PC-9 (cell line): ENCODE measurements at regions of chr16 and their contacts with region 1.

Region 1: GRCh38 chr16:56608043-56608875 is at the start of gene MT2A:
- DNase-seq: peak; percentile 89 to 91
- H3K4me3 ChIP-seq: peak within 1 kb of the TSS; percentile 90
- H3K27ac ChIP-seq: peak within 1 kb of the TSS; percentile 95
- H3K4me1 ChIP-seq: peaks cover 88% of the 10 kb centered on the region
- H3K27me3 ChIP-seq: no peaks in the 10 kb centered on the region
- CTCF ChIP-seq: no peak
- total RNA-seq, gene MT2A: 203 and 353 TPM in 2 replicates

Region 2: DNA sequence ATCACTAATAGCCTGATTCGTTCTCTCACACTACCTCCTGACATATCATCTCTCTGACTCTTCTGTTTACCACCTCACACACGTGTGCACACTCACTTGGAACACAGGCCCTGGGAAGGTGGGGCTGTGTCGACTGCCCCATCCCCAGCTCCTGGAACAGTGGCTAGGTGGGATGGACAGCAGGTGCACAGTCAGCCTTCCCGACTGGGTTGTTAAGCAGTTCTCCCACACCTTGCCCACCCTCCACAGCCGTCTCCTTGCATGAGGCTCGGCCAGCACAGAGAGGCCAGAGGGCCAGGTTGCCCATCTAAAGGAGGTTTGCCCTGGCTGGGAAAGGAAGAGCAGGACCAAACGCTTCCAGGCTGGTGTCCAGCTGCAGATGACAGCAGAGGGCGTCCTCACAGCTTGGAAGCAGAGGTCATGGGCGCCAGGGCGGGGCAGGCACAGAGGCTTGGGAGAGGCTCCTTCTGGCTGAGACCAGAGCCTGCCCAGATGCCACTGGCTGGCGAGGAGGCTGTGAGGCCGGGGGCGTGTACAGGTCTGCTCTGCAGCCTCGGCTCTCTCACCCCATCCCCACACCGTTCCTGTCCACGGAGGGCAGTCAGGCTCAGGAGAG is 275.7 kb before region 1 on chr16:
- CTCF ChIA-PET with region 1: no interaction called
- POLR2A ChIA-PET with region 1: no interaction called
- intact Hi-C with region 1: loop called (anchors 10 kb)
- DNase-seq: peak; percentile 62 to 83
- H3K4me3 ChIP-seq: no peak overlapping the region
- H3K27ac ChIP-seq: peak overlapping the region; percentile 99
- H3K4me1 ChIP-seq: peaks cover 60% of the 10 kb centered on the region
- H3K27me3 ChIP-seq: no peaks in the 10 kb centered on the region
- CTCF ChIP-seq: no peak

Region 3: GRCh38 chr16:56576585-56577293 is 31.5 kb before region 1 on chr16:
- CTCF ChIA-PET with region 1: interaction called, 4 read pairs
- POLR2A ChIA-PET with region 1: no interaction called
- intact Hi-C with region 1: loop called (anchors 2 kb)
- DNase-seq: peak; percentile 92 to 95
- H3K4me3 ChIP-seq: no peak overlapping the region
- H3K27ac ChIP-seq: peak overlapping the region; percentile 75
- H3K4me1 ChIP-seq: peaks cover 14% of the 10 kb centered on the region
- H3K27me3 ChIP-seq: no peaks in the 10 kb centered on the region
- CTCF ChIP-seq: peak; percentile 91

Region 4: GRCh38 chr16:56625140-56625942 is 17.1 kb after region 1 on chr16 and contains the start of gene MT1E:
- CTCF ChIA-PET with region 1: no interaction called
- POLR2A ChIA-PET with region 1: interaction called, 4 read pairs
- intact Hi-C with region 1: loop called (anchors 2 kb)
- DNase-seq: no peak
- H3K4me3 ChIP-seq: no peak within 1 kb of the TSS
- H3K27ac ChIP-seq: peak within 1 kb of the TSS; percentile 62; the same call in 1 of the 2 replicates
- H3K4me1 ChIP-seq: peaks cover 17% of the 10 kb centered on the region
- H3K27me3 ChIP-seq: no peaks in the 10 kb centered on the region
- CTCF ChIP-seq: no peak
- total RNA-seq, gene MT1E: 22.0 and 22.2 TPM in 2 replicates

Region 5: GRCh38 chr16:56643080-56643778 is 35.0 kb after region 1 on chr16:
- CTCF ChIA-PET with region 1: interaction called, 5 read pairs
- POLR2A ChIA-PET with region 1: interaction called, 3 read pairs
- intact Hi-C with region 1: loop called (anchors 1 kb)
- DNase-seq: peak; percentile 69 to 79
- H3K4me3 ChIP-seq: peak overlapping the region; percentile 32; the same call in 1 of the 2 replicates
- H3K27ac ChIP-seq: no peak overlapping the region
- H3K4me1 ChIP-seq: peaks cover 34% of the 10 kb centered on the region
- H3K27me3 ChIP-seq: no peaks in the 10 kb centered on the region
- CTCF ChIP-seq: peak; percentile 54

Region 6: GRCh38 chr16:56681939-56682702 is 73.9 kb after region 1 on chr16 and contains the start of gene MT1X:
- CTCF ChIA-PET with region 1: no interaction called
- POLR2A ChIA-PET with region 1: no interaction called
- intact Hi-C with region 1: loop called (anchors 2 kb)
- DNase-seq: peak; percentile 73 to 91
- H3K4me3 ChIP-seq: peak within 1 kb of the TSS; percentile 79
- H3K27ac ChIP-seq: no peak within 1 kb of the TSS
- H3K4me1 ChIP-seq: peaks cover 36% of the 10 kb centered on the region
- H3K27me3 ChIP-seq: no peaks in the 10 kb centered on the region
- CTCF ChIP-seq: no peak
- total RNA-seq, gene MT1X: 18.9 and 41.2 TPM in 2 replicates

Region 7: DNA sequence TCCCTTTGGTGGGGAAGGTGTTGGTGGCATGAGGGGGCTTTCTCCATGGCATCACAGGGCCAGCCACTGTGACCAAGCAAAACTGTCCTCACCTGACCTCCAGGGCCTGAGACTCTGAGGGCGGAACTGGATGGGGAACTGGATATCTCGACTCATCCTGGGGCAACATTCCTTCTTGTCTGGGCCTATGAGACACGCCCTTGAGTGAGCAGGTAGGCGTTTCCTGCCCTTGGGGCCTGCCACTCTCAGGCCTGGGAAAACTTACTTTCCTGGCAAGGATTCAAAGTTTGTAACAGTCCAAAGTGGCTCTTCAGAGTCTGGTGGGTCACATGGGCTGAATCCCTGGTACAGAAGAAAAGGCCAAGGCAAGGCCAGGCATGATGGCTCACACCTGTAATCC is 83.6 kb after region 1 on chr16:
- CTCF ChIA-PET with region 1: no interaction called
- POLR2A ChIA-PET with region 1: interaction called, 4 read pairs
- intact Hi-C with region 1: loop called (anchors 2 kb)
- DNase-seq: peak; percentile 92 to 96
- H3K4me3 ChIP-seq: no peak overlapping the region
- H3K27ac ChIP-seq: peak overlapping the region; percentile 54
- H3K4me1 ChIP-seq: peaks cover 48% of the 10 kb centered on the region
- H3K27me3 ChIP-seq: no peaks in the 10 kb centered on the region
- CTCF ChIP-seq: no peak

Region 8: GRCh38 chr16:56709443-56710040 is 101.3 kb after region 1 on chr16:
- CTCF ChIA-PET with region 1: no interaction called
- POLR2A ChIA-PET with region 1: no interaction called
- intact Hi-C with region 1: no loop called
- DNase-seq: no peak
- H3K4me3 ChIP-seq: no peak overlapping the region
- H3K27ac ChIP-seq: no peak overlapping the region
- H3K4me1 ChIP-seq: no peaks in the 10 kb centered on the region
- H3K27me3 ChIP-seq: no peaks in the 10 kb centered on the region
- CTCF ChIP-seq: no peak